RWPE1 (cell line): ENCODE measurements at regions of chr1 and their contacts with region 1.

Region 1: GRCh38 chr1:210310562-210311153 is 18.0 kb upstream of the HHAT start:
- DNase-seq: no peak
- H3K27ac ChIP-seq: no peak overlapping the region
- CTCF ChIP-seq: no peak

Region 2: GRCh38 chr1:210200124-210200736 is 110.4 kb before region 1 on chr1:
- CTCF ChIA-PET with region 1: interaction called, 10 read pairs
- POLR2A ChIA-PET with region 1: no interaction called
- DNase-seq: no peak
- H3K27ac ChIP-seq: no peak overlapping the region
- CTCF ChIP-seq: peak; percentile 33